CD4-positive, alpha-beta T cell (primary cell): ENCODE measurements at regions of chrX and their contacts with region 1.

Region 1: DNA sequence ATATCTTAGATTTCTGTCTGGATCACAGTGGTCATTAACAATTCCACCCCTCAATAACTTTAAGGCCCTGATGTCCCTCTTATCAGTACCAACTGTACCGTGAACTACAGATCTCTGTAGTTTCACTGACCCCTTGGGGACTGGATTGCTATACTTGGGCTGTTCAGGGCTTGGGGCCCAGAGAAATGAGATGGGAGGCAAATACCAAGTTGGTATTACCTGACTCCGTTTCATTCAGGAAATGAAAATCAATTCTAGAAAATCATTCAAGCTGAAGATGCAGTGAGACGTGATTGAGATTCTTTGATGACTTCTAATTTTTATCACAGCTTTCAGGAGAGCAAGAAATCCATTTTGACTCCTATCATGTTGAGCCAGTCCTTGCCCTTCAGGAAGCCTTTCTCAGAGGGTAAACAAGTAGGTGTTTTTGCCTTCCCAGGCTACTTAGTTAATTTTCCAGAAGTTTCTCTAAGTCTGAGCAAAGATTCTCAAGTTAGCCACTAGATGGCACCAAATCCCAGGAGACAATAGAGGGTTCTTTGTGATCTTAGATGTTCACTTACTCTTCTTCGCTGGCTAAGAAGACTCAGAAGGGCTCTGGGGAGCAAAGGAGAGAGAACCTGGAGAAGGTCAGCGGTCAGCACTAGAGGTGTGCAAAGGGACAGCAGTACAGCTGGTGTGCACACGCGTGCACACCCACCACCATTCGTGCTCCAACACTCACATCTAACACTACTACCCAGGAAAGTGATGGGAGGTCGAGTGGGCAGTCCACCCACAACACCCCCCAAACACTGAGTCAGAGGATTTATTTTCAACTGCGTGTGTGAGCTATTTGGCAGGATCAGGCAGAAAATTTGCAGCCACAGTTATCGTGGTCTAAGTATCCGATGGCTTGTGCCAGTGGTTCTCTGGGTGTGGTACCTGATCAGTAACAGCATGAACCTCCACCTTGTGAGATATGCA is 7.4 kb downstream of the HNRNPH2 start:
- DNase-seq: peak in 5 of 14 experiments; percentile 11 to 84 (median 76)
- ATAC-seq: peak; percentile 81
- H3K4me3 ChIP-seq: no peak overlapping the region
- H3K4me3 Mint-ChIP-seq: peak overlapping the region; percentile 84
- H3K27ac ChIP-seq: peak overlapping the region; percentile 21 to 55
- H3K27ac Mint-ChIP-seq: peak overlapping the region; percentile 80
- H3K4me1 ChIP-seq: peaks cover 36% of the 10 kb centered on the region
- H3K4me1 Mint-ChIP-seq: peaks cover 65% of the 10 kb centered on the region
- H3K27me3 ChIP-seq: no peaks in the 10 kb centered on the region
- H3K27me3 Mint-ChIP-seq: no peaks in the 10 kb centered on the region
- CTCF ChIP-seq: peak; percentile 64

Region 2: GRCh38 chrX:101390664-101391525 is 24.6 kb before region 1 on chrX and contains the start of gene RPL36A:
- CTCF ChIA-PET with region 1: interaction called, 12 read pairs
- POLR2A ChIA-PET with region 1: interaction called, 12 read pairs
- intact Hi-C with region 1: no loop called
- DNase-seq: peak; percentile 57 to 92 (median 73)
- ATAC-seq: peak; percentile 92
- H3K4me3 ChIP-seq: peak within 1 kb of the TSS; percentile 71
- H3K4me3 Mint-ChIP-seq: peak within 1 kb of the TSS; percentile 95
- H3K27ac ChIP-seq: peak within 1 kb of the TSS; percentile 41 to 82
- H3K27ac Mint-ChIP-seq: peak within 1 kb of the TSS; percentile 95
- H3K4me1 ChIP-seq: peaks cover 15% of the 10 kb centered on the region
- H3K4me1 Mint-ChIP-seq: peaks cover 27% of the 10 kb centered on the region
- H3K27me3 ChIP-seq: no peaks in the 10 kb centered on the region
- H3K27me3 Mint-ChIP-seq: no peaks in the 10 kb centered on the region
- CTCF ChIP-seq: peak; percentile 72
- total RNA-seq, gene RPL36A: 417 to 536 TPM

Region 3: GRCh38 chrX:101759000-101759399 is 343.5 kb after region 1 on chrX:
- CTCF ChIA-PET with region 1: no interaction called
- POLR2A ChIA-PET with region 1: no interaction called
- intact Hi-C with region 1: loop called (anchors 2 to 5 kb)
- DNase-seq: peak in 9 of 14 experiments; percentile 1 to 59 (median 11)
- ATAC-seq: peak; percentile 84
- H3K4me3 ChIP-seq: no peak overlapping the region
- H3K4me3 Mint-ChIP-seq: no peak overlapping the region
- H3K27ac ChIP-seq: no peak overlapping the region
- H3K27ac Mint-ChIP-seq: no peak overlapping the region
- H3K4me1 ChIP-seq: no peaks in the 10 kb centered on the region
- H3K4me1 Mint-ChIP-seq: no peaks in the 10 kb centered on the region
- H3K27me3 ChIP-seq: no peaks in the 10 kb centered on the region
- H3K27me3 Mint-ChIP-seq: no peaks in the 10 kb centered on the region
- CTCF ChIP-seq: peak; percentile 41

Region 4: DNA sequence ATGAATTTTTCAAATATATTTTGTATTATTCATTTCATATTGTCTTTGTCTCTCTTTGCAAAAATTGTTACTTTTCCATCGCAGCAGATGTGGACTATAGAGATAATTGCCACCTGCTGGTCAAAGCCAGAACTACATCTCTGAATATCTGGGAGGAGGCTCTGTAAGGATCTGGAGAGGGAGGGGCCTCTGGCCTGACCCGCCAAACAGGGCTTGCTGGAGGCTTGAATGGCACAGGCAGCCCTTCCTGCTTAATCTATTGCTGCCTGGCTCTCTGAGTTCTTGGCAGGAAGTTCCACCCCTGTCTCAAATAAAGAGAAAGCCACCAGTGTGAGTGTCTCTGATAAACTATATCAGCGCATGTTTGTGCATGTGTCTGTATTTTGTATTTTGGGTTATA is 383.9 kb after region 1 on chrX:
- CTCF ChIA-PET with region 1: no interaction called
- POLR2A ChIA-PET with region 1: no interaction called
- intact Hi-C with region 1: loop called (anchors 2 kb)
- DNase-seq: peak; percentile 51 to 89 (median 70)
- ATAC-seq: peak; percentile 100
- H3K4me3 ChIP-seq: no peak overlapping the region
- H3K4me3 Mint-ChIP-seq: peak overlapping the region; percentile 44
- H3K27ac ChIP-seq: no peak overlapping the region
- H3K27ac Mint-ChIP-seq: peak overlapping the region; percentile 21
- H3K4me1 ChIP-seq: peaks cover 3% of the 10 kb centered on the region
- H3K4me1 Mint-ChIP-seq: peaks cover 12% of the 10 kb centered on the region
- H3K27me3 ChIP-seq: no peaks in the 10 kb centered on the region
- H3K27me3 Mint-ChIP-seq: no peaks in the 10 kb centered on the region
- CTCF ChIP-seq: peak; percentile 57

Region 5: GRCh38 chrX:102863735-102864134 is 1448.3 kb after region 1 on chrX:
- CTCF ChIA-PET with region 1: no interaction called
- POLR2A ChIA-PET with region 1: no interaction called
- intact Hi-C with region 1: loop called in 1 of 2 experiments (anchors 5 kb)
- DNase-seq: peak; percentile 63 to 86 (median 76)
- ATAC-seq: peak; percentile 90
- H3K4me3 ChIP-seq: no peak overlapping the region
- H3K4me3 Mint-ChIP-seq: no peak overlapping the region
- H3K27ac ChIP-seq: no peak overlapping the region
- H3K27ac Mint-ChIP-seq: no peak overlapping the region
- H3K4me1 ChIP-seq: no peaks in the 10 kb centered on the region
- H3K4me1 Mint-ChIP-seq: no peaks in the 10 kb centered on the region
- H3K27me3 ChIP-seq: no peaks in the 10 kb centered on the region
- H3K27me3 Mint-ChIP-seq: no peaks in the 10 kb centered on the region
- CTCF ChIP-seq: peak; percentile 79